Ovary (tissue), 10 donors: ENCODE measurements at regions of chr10 and their contacts with region 1.

Region 1: GRCh38 chr10:13949844-13950595 is 363.3 kb downstream of the PRPF18 start:
- DNase-seq: no peak
- H3K4me3 ChIP-seq: no peak overlapping the region
- H3K27ac ChIP-seq: no peak overlapping the region
- H3K4me1 ChIP-seq: no peaks in the 10 kb centered on the region
- H3K27me3 ChIP-seq: no peaks in the 10 kb centered on the region
- CTCF ChIP-seq: no peak
- EP300 ChIP-seq: no peak
- POLR2A ChIP-seq: no peak

Region 2: GRCh38 chr10:12993595-12993994 is 956.4 kb before region 1 on chr10:
- intact Hi-C with region 1: no loop called
- DNase-seq: peak in 2 of 5 donors; percentile 28 to 40
- H3K4me3 ChIP-seq: no peak overlapping the region
- H3K27ac ChIP-seq: peak overlapping the region in 1 of 2 donors; percentile 52
- H3K4me1 ChIP-seq: peaks cover 11% of the 10 kb centered on the region
- H3K27me3 ChIP-seq: no peaks in the 10 kb centered on the region
- CTCF ChIP-seq: no peak
- EP300 ChIP-seq: no peak
- POLR2A ChIP-seq: no peak

Region 3: GRCh38 chr10:13003759-13004158 is 946.3 kb before region 1 on chr10:
- intact Hi-C with region 1: no loop called
- DNase-seq: no peak
- H3K4me3 ChIP-seq: no peak overlapping the region
- H3K27ac ChIP-seq: no peak overlapping the region
- H3K4me1 ChIP-seq: no peaks in the 10 kb centered on the region
- H3K27me3 ChIP-seq: no peaks in the 10 kb centered on the region
- CTCF ChIP-seq: no peak
- EP300 ChIP-seq: no peak
- POLR2A ChIP-seq: no peak

Region 4: GRCh38 chr10:13844651-13845050 is 105.4 kb before region 1 on chr10:
- intact Hi-C with region 1: loop called in 1 of 4 experiments (anchors 5 kb)
- DNase-seq: no peak
- H3K4me3 ChIP-seq: no peak overlapping the region
- H3K27ac ChIP-seq: no peak overlapping the region
- H3K4me1 ChIP-seq: no peaks in the 10 kb centered on the region
- H3K27me3 ChIP-seq: no peaks in the 10 kb centered on the region
- CTCF ChIP-seq: no peak
- EP300 ChIP-seq: no peak
- POLR2A ChIP-seq: no peak